Activated CD8-positive, alpha-beta T cell treated with anti-CD3 and anti-CD28 coated beads, Interleukin-2, amount 10 ng/mL, durations not matched to agents 7 days and 5 days (primary cell): ENCODE measurements at regions of chr15 and their contacts with region 1.

Region 1: DNA sequence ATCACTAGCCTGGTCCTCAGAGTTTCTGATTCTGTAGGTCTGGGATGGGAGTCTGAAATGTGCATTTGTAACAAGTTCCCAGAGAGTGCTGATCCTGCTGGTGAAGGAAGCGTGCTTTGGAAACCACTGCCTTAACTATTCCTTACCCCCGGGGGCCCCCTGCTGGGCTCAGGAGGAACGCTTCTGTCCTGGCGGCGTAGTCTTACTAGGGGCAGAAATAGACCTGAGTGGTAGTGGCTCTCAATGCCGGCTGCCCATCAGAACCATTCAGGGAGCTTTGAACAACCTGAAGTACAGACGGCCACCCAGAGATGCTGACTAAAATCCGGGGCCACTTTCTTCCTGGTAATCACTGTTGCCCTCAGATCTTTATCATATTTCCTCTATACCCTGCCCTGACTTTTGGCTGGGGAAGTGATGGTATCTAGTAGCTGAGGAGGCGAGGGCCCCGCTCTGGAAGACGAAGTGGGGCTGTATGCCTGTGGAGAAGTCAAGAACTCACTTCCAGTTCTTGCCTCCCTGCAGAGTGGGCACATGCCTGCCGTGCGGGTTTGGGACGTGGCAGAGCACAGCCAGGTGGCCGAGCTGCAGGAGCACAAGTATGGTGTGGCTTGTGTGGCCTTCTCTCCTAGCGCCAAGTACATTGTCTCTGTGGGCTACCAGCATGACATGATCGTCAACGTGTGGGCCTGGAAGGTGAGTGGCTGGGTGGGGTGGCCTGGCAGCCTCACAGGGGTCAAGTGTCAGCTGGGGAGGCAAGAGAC is 16.3 kb upstream of the JMJD7 start:
- DNase-seq: peak; percentile 80
- ATAC-seq: peak; percentile 89
- H3K4me3 Mint-ChIP-seq: no peak overlapping the region
- H3K27ac Mint-ChIP-seq: peak overlapping the region; percentile 69
- H3K4me1 Mint-ChIP-seq: peaks cover 34% of the 10 kb centered on the region
- H3K27me3 Mint-ChIP-seq: no peaks in the 10 kb centered on the region

Region 2: GRCh38 chr15:41603941-41604911 is 207.4 kb before region 1 on chr15:
- CTCF ChIA-PET with region 1: interaction called, 34 read pairs
- POLR2A ChIA-PET with region 1: no interaction called
- DNase-seq: peak; percentile 66
- ATAC-seq: peak; percentile 88
- H3K4me3 Mint-ChIP-seq: peak overlapping the region; percentile 32
- H3K27ac Mint-ChIP-seq: no peak overlapping the region
- H3K4me1 Mint-ChIP-seq: peaks cover 9% of the 10 kb centered on the region
- H3K27me3 Mint-ChIP-seq: peaks cover 25% of the 10 kb centered on the region

Region 3: GRCh38 chr15:41782371-41783282 is 29.0 kb before region 1 on chr15:
- CTCF ChIA-PET with region 1: interaction called, 333 read pairs
- POLR2A ChIA-PET with region 1: interaction called, 3 read pairs
- DNase-seq: no peak
- ATAC-seq: no peak
- H3K4me3 Mint-ChIP-seq: no peak overlapping the region
- H3K27ac Mint-ChIP-seq: no peak overlapping the region
- H3K4me1 Mint-ChIP-seq: peaks cover 53% of the 10 kb centered on the region
- H3K27me3 Mint-ChIP-seq: no peaks in the 10 kb centered on the region

Region 4: DNA sequence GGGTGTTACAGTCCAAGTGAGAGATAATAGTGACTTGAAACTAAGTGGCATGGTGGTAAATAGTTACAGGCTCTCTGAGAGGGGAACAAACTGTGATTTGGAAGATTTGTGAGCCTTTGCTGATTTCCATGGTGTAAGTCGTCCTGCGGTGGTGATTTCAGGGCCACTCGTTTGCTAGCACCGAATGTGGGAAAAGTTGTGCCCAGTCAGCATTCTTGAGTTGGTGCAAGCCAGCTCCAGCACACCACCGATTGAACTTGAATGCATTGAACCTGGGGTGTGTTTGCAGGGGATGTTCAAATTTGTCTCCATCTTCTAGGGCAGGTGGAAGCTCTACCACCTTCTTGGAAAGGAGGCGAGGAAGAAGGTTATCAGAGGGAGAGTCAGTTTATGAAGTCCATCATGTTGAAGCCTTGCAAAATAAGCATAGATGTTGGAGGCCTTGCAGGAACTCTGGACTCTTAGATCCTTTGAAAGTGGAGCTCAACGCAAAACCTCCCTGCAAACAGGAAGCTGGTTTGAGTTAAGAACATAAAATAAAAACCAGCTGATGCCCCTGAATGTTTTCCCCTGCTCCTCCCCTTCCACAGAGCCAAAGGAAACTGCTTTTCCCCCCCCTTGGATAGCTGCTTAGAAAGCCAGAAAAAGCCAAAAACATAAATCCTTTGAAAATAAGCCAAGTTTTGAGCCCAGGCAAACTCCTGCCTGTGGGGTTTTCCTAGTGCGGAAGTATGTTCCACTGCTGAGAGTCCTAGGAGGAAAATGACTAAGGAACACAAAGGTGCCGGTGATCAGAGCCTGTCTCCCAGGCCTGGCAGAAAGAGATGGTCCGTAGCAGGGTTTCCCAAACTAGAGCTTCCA is 15.4 kb before region 1 on chr15:
- CTCF ChIA-PET with region 1: interaction called, 33 read pairs
- POLR2A ChIA-PET with region 1: interaction called, 3 read pairs
- DNase-seq: no peak
- ATAC-seq: no peak
- H3K4me3 Mint-ChIP-seq: no peak overlapping the region
- H3K27ac Mint-ChIP-seq: peak overlapping the region; percentile 70
- H3K4me1 Mint-ChIP-seq: peaks cover 36% of the 10 kb centered on the region
- H3K27me3 Mint-ChIP-seq: no peaks in the 10 kb centered on the region

Region 5: GRCh38 chr15:41936649-41937567 is 125.3 kb after region 1 on chr15:
- CTCF ChIA-PET with region 1: interaction called, 14 read pairs
- POLR2A ChIA-PET with region 1: no interaction called
- DNase-seq: peak; percentile 83
- ATAC-seq: peak; percentile 85
- H3K4me3 Mint-ChIP-seq: peak overlapping the region; percentile 49
- H3K27ac Mint-ChIP-seq: peak overlapping the region; percentile 95
- H3K4me1 Mint-ChIP-seq: peaks cover 62% of the 10 kb centered on the region
- H3K27me3 Mint-ChIP-seq: no peaks in the 10 kb centered on the region